Psoas muscle (tissue), 8 donors: ENCODE measurements at regions of chr17 and their contacts with region 1.

Region 1: DNA sequence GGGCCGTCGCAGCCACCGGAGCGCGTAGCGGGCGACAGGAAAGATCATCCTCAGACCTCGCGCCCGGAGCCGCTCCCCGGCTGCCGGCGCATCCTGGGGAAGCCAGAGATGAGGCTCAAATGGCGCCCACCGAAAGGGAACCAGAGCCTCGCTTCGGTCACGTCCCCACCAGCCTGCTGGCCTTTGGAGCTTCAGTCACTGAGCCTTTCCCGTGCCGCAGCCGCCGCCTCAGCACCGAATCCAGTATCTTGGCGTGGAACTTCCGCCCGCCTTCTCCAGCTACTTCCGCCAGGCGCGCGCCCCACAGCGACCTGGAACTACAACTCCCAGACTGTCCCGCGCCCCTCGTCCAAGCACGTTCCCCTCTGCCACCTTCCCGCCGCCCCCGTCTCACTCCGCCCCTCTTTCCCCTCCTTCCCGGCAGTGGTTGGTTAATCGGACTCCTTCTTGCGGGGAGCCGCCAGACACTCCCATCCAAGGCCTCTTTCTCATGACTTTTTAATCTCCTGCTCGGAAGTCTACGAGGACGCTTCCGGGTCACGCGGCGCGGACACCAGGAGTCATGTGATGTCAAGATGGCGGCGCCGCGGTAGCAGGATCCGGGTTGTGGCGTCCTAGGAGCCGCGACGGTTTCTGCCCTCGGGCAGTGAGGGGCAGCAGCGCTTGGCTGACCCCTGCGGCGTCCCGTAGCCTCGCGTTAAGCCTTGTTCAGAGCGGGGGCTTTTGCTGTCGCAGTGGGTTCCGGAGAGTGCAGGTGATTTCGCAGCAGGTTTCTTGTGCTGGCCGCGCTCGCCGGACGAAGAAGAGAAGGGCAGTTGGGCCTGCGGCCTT is at the starts of genes SMCR8 and TOP3A:
- DNase-seq: peak; percentile 99
- ATAC-seq: peak; percentile 96 to 97 (median 97)
- H3K4me3 ChIP-seq: peak within 1 kb of the TSS; percentile 99
- H3K27ac ChIP-seq: peak within 1 kb of the TSS; percentile 95
- H3K4me1 ChIP-seq: peaks cover 58% of the 10 kb centered on the region
- H3K27me3 ChIP-seq: no peaks in the 10 kb centered on the region
- CTCF ChIP-seq: no peak
- total RNA-seq, gene SMCR8: 8.0 to 14.4 (median 12.2) TPM
- total RNA-seq, gene TOP3A: 8.8 to 21.3 (median 14.1) TPM

Region 2: GRCh38 chr17:18225121-18225566 is 89.8 kb before region 1 on chr17:
- intact Hi-C with region 1: loop called in 1 of 2 experiments (anchors 5 kb)
- DNase-seq: peak; percentile 98 to 99
- ATAC-seq: peak; percentile 97 to 99 (median 98)
- H3K4me3 ChIP-seq: peak overlapping the region; percentile 65
- H3K27ac ChIP-seq: peak overlapping the region; percentile 65
- H3K4me1 ChIP-seq: peaks cover 11% of the 10 kb centered on the region
- H3K27me3 ChIP-seq: no peaks in the 10 kb centered on the region
- CTCF ChIP-seq: no peak

Region 3: GRCh38 chr17:18257982-18258355 is 57.0 kb before region 1 on chr17:
- intact Hi-C with region 1: loop called in 1 of 2 experiments (anchors 5 kb)
- DNase-seq: peak; percentile 91 to 94
- ATAC-seq: peak; percentile 73 to 77 (median 74)
- H3K4me3 ChIP-seq: peak overlapping the region; percentile 98
- H3K27ac ChIP-seq: peak overlapping the region; percentile 100
- H3K4me1 ChIP-seq: peaks cover 53% of the 10 kb centered on the region
- H3K27me3 ChIP-seq: no peaks in the 10 kb centered on the region
- CTCF ChIP-seq: peak; percentile 6

Region 4: DNA sequence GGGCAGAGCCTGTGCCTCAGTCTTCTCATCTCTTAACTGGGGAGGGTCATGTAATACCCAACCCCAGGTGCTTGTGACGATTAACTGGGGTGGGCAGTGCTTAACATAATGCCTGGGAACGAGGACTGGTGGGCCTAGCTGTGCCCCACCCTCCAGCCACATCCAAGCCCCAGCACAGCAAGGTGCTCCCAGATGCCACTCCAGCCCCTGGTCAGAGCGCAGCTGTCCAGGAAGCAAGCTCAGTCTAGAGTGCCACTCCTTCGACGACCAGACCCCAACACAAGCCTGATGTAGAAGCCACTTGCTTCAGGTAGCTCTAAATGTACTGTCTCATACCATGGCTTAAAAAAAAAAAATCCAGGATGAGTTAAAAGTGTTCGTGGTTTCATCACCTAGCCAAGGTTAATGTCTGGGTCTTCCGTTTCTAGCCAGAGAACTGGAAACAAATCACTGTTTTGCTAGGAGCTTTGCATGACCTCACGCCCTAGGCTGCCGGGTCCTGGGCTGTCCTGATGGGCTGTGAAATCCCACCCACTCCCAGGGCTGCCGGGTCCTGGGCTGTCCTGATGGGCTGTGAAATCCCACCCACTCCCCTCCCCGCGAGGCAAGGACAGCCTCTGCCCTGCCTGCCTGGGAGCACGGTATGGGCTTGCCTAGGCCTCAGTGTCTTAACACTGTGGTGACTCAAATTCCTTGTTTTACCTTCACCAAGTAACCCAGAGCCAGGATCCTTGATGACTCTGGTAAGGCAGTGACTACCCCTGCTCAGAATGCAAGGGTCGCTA is 46.8 kb before region 1 on chr17:
- intact Hi-C with region 1: no loop called
- DNase-seq: no peak
- ATAC-seq: peak; percentile 34 to 63 (median 48)
- H3K4me3 ChIP-seq: no peak overlapping the region
- H3K27ac ChIP-seq: peak overlapping the region; percentile 36
- H3K4me1 ChIP-seq: peaks cover 19% of the 10 kb centered on the region
- H3K27me3 ChIP-seq: no peaks in the 10 kb centered on the region
- CTCF ChIP-seq: no peak

Region 5: GRCh38 chr17:18363101-18364049 is 48.4 kb after region 1 on chr17 and contains the start of gene SHMT1:
- intact Hi-C with region 1: no loop called
- DNase-seq: peak; percentile 95 to 97
- ATAC-seq: peak; percentile 99 to 100 (median 99)
- H3K4me3 ChIP-seq: peak within 1 kb of the TSS; percentile 81
- H3K27ac ChIP-seq: peak within 1 kb of the TSS; percentile 80
- H3K4me1 ChIP-seq: peaks cover 9% of the 10 kb centered on the region
- H3K27me3 ChIP-seq: no peaks in the 10 kb centered on the region
- CTCF ChIP-seq: no peak
- total RNA-seq, gene SHMT1: 11.9 to 15.1 (median 14.4) TPM